ENCODE measurements at regions of chr17 and their contacts with region 1.

Region 1: GRCh38 chr17:62714016-62714746 is 86.7 kb downstream of the MRC2 start:
- DNase-seq: no peak
- H3K4me3 ChIP-seq: no peak overlapping the region
- H3K27ac ChIP-seq: no peak overlapping the region
- H3K4me1 ChIP-seq: peaks cover 4 to 16% of the 10 kb centered on the region in 2 experiments; a peak in 3 of 4 replicates
- H3K27me3 ChIP-seq: no peaks in the 10 kb centered on the region
- CTCF ChIP-seq: no peak
- EP300 ChIP-seq: peak in 1 of 2 experiments; percentile 35; a peak in 1 of 4 replicates
- RAD21 ChIP-seq: no peak

Region 2: DNA sequence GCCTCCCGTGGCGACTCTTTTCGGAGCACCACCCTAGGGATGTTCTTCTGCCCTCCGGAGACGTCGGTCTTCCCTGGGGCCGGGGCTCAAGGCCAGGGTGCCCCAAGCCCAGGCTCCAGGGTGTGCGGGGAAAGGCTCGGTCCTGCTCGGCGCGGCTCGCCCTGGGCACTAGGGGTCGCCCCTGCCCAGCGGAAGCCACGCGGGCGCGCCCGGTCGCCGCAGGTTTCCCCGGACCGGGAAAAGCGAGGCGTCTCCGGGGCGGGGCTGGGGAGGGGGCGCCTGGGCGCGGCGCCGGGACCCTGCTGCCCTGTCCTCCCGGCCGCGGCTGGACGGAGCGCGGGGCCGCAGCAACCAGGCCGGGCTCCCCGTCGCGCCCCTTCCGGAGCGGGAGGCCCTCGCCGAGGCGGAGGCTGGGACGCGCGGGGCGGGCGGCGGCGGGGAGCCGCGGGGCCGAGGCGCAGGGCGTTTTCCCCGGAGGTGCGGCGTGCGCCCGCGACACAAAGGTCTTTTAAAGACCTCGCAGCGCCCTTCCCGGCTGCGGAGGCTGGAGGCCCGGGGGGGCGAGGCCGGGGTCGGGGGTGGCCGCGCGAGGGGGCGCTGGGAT is 10.3 kb before region 1 on chr17:
- CTCF ChIA-PET with region 1: interaction called, 24 read pairs
- POLR2A ChIA-PET with region 1: no interaction called
- DNase-seq: peak; percentile 96
- H3K4me3 ChIP-seq: peak overlapping the region; percentile 67 to 73
- H3K27ac ChIP-seq: peak overlapping the region; percentile 69 to 85
- H3K4me1 ChIP-seq: peaks cover 15 to 29% of the 10 kb centered on the region in 2 experiments; a peak in 3 of 4 replicates
- H3K27me3 ChIP-seq: no peaks in the 10 kb centered on the region
- CTCF ChIP-seq: peak; percentile 82
- EP300 ChIP-seq: no peak; a peak in 1 of 4 replicates
- RAD21 ChIP-seq: peak; percentile 95

Measured in SK-N-SH (cell line).